T-cell (primary cell): ENCODE measurements at regions of chr9 and their contacts with region 1.

Region 1: GRCh38 chr9:97921959-97922724 is at the start of gene TRMO:
- DNase-seq: peak; percentile 96 to 100 (median 97)
- ATAC-seq: peak; percentile 77 to 82 (median 78)
- H3K4me3 ChIP-seq: peak within 1 kb of the TSS; percentile 69 to 74
- H3K4me3 Mint-ChIP-seq: peak within 1 kb of the TSS; percentile 87 to 96 (median 92)
- H3K27ac ChIP-seq: peak within 1 kb of the TSS; percentile 99
- H3K27ac Mint-ChIP-seq: peak within 1 kb of the TSS; percentile 98 to 100
- H3K4me1 ChIP-seq: peaks cover 36 to 38% of the 10 kb centered on the region in 2 experiments
- H3K4me1 Mint-ChIP-seq: peaks cover 50 to 55% (median 53%) of the 10 kb centered on the region in 3 donors
- H3K27me3 ChIP-seq: no peaks in the 10 kb centered on the region
- H3K27me3 Mint-ChIP-seq: no peaks in the 10 kb centered on the region
- total RNA-seq, gene TRMO: 38.8 to 47.4 (median 44.7) TPM

Region 2: GRCh38 chr9:97890038-97890437 is 32.1 kb before region 1 on chr9:
- CTCF ChIA-PET with region 1: interaction called, 4 to 32 read pairs
- POLR2A ChIA-PET with region 1: interaction called, 6 to 7 read pairs
- DNase-seq: peak in 34 of 35 experiments; percentile 33 to 79 (median 58)
- ATAC-seq: peak in 3 of 4 experiments; percentile 50 to 73 (median 63)
- H3K4me3 ChIP-seq: no peak overlapping the region
- H3K4me3 Mint-ChIP-seq: no peak overlapping the region
- H3K27ac ChIP-seq: no peak overlapping the region
- H3K27ac Mint-ChIP-seq: no peak overlapping the region
- H3K4me1 ChIP-seq: peaks cover 0 to 9% of the 10 kb centered on the region in 2 experiments
- H3K4me1 Mint-ChIP-seq: peaks cover 10 to 14% (median 10%) of the 10 kb centered on the region in 3 donors
- H3K27me3 ChIP-seq: no peaks in the 10 kb centered on the region
- H3K27me3 Mint-ChIP-seq: no peaks in the 10 kb centered on the region

Region 3: GRCh38 chr9:97906236-97906831 is 15.8 kb before region 1 on chr9:
- CTCF ChIA-PET with region 1: interaction called, 10 to 59 read pairs
- POLR2A ChIA-PET with region 1: interaction called, 28 to 62 read pairs
- DNase-seq: peak in 32 of 35 experiments; percentile 37 to 78 (median 56)
- ATAC-seq: peak in 3 of 4 experiments; percentile 6 to 58 (median 14)
- H3K4me3 ChIP-seq: peak overlapping the region; percentile 29 to 39
- H3K4me3 Mint-ChIP-seq: peak overlapping the region; percentile 71 to 79 (median 76)
- H3K27ac ChIP-seq: peak overlapping the region; percentile 75
- H3K27ac Mint-ChIP-seq: peak overlapping the region; percentile 93 to 97
- H3K4me1 ChIP-seq: peaks cover 66 to 89% of the 10 kb centered on the region in 2 experiments
- H3K4me1 Mint-ChIP-seq: peaks cover 92 to 99% (median 92%) of the 10 kb centered on the region in 3 donors
- H3K27me3 ChIP-seq: no peaks in the 10 kb centered on the region
- H3K27me3 Mint-ChIP-seq: no peaks in the 10 kb centered on the region

Region 4: GRCh38 chr9:97982683-97983588 is 60.8 kb after region 1 on chr9 and contains the start of gene ANP32B:
- CTCF ChIA-PET with region 1: interaction called, 3 to 8 read pairs
- POLR2A ChIA-PET with region 1: interaction called, 5 to 20 read pairs
- DNase-seq: peak; percentile 88 to 96 (median 92)
- ATAC-seq: peak; percentile 79 to 87 (median 82)
- H3K4me3 ChIP-seq: peak within 1 kb of the TSS; percentile 79 to 82
- H3K4me3 Mint-ChIP-seq: peak within 1 kb of the TSS; percentile 80 to 81 (median 80)
- H3K27ac ChIP-seq: peak within 1 kb of the TSS; percentile 93
- H3K27ac Mint-ChIP-seq: peak within 1 kb of the TSS; percentile 84 to 88
- H3K4me1 ChIP-seq: peaks cover 30 to 61% of the 10 kb centered on the region in 2 experiments
- H3K4me1 Mint-ChIP-seq: peaks cover 55 to 56% (median 56%) of the 10 kb centered on the region in 3 donors
- H3K27me3 ChIP-seq: peaks cover 0 to 4% of the 10 kb centered on the region in 2 experiments
- H3K27me3 Mint-ChIP-seq: no peaks in the 10 kb centered on the region
- total RNA-seq, gene ANP32B: 151 to 201 (median 172) TPM

Region 5: GRCh38 chr9:98045234-98046179 is 123.4 kb after region 1 on chr9:
- CTCF ChIA-PET with region 1: interaction called in 1 of 2 experiments, 18 read pairs
- POLR2A ChIA-PET with region 1: interaction called in 1 of 2 experiments, 4 read pairs
- DNase-seq: peak in 29 of 35 experiments; percentile 6 to 80 (median 30)
- ATAC-seq: peak; percentile 95 to 98 (median 97)
- H3K4me3 ChIP-seq: peak overlapping the region; percentile 44 to 66
- H3K4me3 Mint-ChIP-seq: peak overlapping the region; percentile 75 to 81 (median 80)
- H3K27ac ChIP-seq: peak overlapping the region; percentile 50
- H3K27ac Mint-ChIP-seq: peak overlapping the region; percentile 76 to 92
- H3K4me1 ChIP-seq: peaks cover 0 to 11% of the 10 kb centered on the region in 2 experiments
- H3K4me1 Mint-ChIP-seq: peaks cover 31 to 37% (median 33%) of the 10 kb centered on the region in 3 donors
- H3K27me3 ChIP-seq: no peaks in the 10 kb centered on the region
- H3K27me3 Mint-ChIP-seq: peaks cover 0 to under 1% of the 10 kb centered on the region in 2 donors

Region 6: GRCh38 chr9:98168941-98169488 is 246.9 kb after region 1 on chr9:
- CTCF ChIA-PET with region 1: no interaction called
- POLR2A ChIA-PET with region 1: no interaction called
- DNase-seq: peak in 22 of 35 experiments; percentile 6 to 45 (median 22)
- ATAC-seq: peak; percentile 52 to 89 (median 82)
- H3K4me3 ChIP-seq: no peak overlapping the region
- H3K4me3 Mint-ChIP-seq: peak overlapping the region in 2 of 3 donors; percentile 39 to 49
- H3K27ac ChIP-seq: peak overlapping the region; percentile 63
- H3K27ac Mint-ChIP-seq: peak overlapping the region; percentile 90
- H3K4me1 ChIP-seq: peaks cover 0 to 36% of the 10 kb centered on the region in 2 experiments
- H3K4me1 Mint-ChIP-seq: peaks cover 43 to 73% (median 68%) of the 10 kb centered on the region in 3 donors
- H3K27me3 ChIP-seq: no peaks in the 10 kb centered on the region
- H3K27me3 Mint-ChIP-seq: no peaks in the 10 kb centered on the region

Region 7: GRCh38 chr9:98255578-98256296 is 333.6 kb after region 1 on chr9 and contains the start of gene TBC1D2:
- CTCF ChIA-PET with region 1: interaction called, 3 to 11 read pairs
- POLR2A ChIA-PET with region 1: no interaction called
- DNase-seq: peak; percentile 93 to 99 (median 96)
- ATAC-seq: peak; percentile 91 to 92 (median 92)
- H3K4me3 ChIP-seq: peak within 1 kb of the TSS; percentile 93 to 97
- H3K4me3 Mint-ChIP-seq: peak within 1 kb of the TSS; percentile 88 to 95 (median 89)
- H3K27ac ChIP-seq: peak within 1 kb of the TSS; percentile 88
- H3K27ac Mint-ChIP-seq: peak within 1 kb of the TSS; percentile 97 to 99
- H3K4me1 ChIP-seq: peaks cover 5 to 23% of the 10 kb centered on the region in 2 experiments
- H3K4me1 Mint-ChIP-seq: peaks cover 33 to 39% (median 33%) of the 10 kb centered on the region in 3 donors
- H3K27me3 ChIP-seq: no peaks in the 10 kb centered on the region
- H3K27me3 Mint-ChIP-seq: no peaks in the 10 kb centered on the region
- total RNA-seq, gene TBC1D2: 4.5 to 10.7 (median 7.1) TPM